ENCODE measurements at regions of chr10 and their contacts with region 1.

Region 1: DNA sequence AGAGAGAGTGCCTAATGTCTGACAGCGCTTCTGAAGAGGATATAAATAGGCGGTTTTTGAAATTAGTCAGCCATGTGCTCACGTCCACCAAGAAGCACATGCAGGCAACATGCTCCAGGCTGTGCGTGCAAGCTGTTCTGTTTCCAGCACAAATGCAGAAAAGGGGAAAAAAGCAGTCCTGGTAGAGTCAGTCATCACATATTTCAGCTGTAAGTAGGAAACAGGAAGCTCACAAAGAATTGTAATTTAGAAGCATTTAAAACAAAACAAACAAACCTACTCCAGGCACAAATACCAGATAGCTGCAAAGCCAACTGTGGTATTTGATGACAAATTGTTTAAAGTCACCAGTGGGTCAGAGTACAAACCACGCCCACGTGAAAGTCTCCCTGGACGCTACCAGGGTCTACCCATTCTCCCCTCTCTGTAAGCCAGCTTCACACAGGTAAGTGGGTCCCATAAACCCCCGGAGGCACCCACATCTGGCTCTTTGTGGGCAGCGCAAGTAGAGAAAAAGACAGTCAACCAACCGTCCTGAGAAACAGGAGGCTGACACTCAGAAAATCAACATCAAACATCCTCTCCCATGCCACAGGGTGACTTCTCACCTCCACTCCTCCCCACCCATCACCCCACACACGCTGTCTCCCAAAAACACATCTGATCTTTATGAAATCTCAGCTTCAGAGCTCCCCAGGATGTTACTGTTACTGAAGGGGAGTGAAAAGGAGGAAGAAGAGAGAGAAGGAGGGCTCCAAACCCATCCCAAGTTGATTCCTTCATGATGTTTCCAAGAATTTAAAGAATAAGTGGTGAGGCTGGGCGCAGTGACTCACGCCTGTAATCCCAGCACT is 186.4 kb downstream of the FAM107B start:
- DNase-seq: no peak
- H3K4me3 ChIP-seq: no peak overlapping the region
- H3K27ac ChIP-seq: peak overlapping the region; percentile 25
- H3K4me1 ChIP-seq: peaks cover 83% of the 10 kb centered on the region
- CTCF ChIP-seq: no peak

Region 2: DNA sequence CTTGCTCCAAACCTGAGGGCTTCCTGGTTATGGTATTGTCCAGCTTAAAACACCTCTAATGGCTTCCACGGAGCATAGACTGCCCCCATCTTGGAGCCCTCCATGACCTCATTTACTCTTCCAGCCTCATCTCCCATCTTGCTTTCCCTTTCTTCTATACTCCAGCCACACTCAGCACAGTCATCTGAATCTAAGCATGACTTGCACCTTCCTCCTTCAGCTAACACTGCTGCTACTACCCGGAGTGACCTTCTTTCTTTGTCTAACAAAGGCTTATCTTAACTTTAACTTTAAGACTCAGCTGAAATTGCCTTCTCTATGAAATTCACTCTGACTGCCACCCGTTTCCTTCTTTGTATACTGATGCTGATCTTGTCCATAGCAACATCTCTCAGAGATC is 51.3 kb after region 1 on chr10:
- CTCF ChIA-PET with region 1: no interaction called
- POLR2A ChIA-PET with region 1: no interaction called
- intact Hi-C with region 1: no loop called
- DNase-seq: no peak
- H3K4me3 ChIP-seq: no peak overlapping the region
- H3K27ac ChIP-seq: no peak overlapping the region
- H3K4me1 ChIP-seq: peaks cover 10% of the 10 kb centered on the region
- CTCF ChIP-seq: no peak

Region 3: DNA sequence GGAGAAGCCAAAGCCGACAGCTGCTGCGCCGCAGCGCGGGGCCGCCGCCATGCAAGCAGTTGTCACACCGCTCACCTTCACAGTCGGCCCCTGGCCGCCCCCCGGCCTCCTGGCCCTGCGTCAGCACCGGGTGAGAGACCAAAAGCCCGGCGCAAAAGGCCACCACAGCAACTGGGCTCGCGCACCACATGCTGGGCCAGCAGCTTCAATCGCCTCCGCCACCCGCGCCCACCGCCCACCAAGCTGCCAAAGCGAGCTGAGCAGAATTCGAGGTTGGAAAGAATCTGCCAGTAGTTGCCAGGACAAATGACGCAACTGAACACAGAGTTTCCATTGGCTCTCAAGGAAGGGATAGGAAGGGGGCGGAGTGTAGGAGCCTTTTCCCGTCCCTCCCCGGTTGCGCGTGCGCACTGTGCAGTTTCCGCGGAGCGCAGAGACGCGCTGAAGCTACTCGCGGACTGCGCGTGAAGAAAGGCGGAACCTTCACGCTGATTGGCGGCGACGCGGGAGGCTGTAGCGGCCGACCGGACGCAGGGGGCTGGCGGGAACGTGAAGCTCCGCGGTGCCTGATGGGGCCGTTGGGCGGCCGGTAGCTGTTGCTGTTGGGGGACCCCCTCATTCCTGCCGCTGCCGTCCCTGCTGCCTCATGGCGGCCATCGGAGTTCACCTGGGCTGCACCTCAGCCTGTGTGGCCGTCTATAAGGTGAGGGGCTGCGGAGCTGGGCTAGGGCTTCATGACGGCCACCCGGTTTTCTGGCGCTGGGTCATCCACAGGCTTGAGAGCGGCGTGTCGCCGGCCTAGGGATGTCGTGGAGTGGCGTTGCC is 249.7 kb after region 1 on chr10 and contains the starts of genes CDNF, HSPA14 and MSANTD7:
- CTCF ChIA-PET with region 1: no interaction called
- POLR2A ChIA-PET with region 1: interaction called, 10 read pairs
- intact Hi-C with region 1: no loop called
- DNase-seq: peak; percentile 100
- H3K4me3 ChIP-seq: peak within 1 kb of the TSS; percentile 88
- H3K27ac ChIP-seq: peak within 1 kb of the TSS; percentile 56
- H3K4me1 ChIP-seq: peaks cover 12% of the 10 kb centered on the region
- CTCF ChIP-seq: no peak
- total RNA-seq, gene CDNF: 0.72 and 3.2 TPM in 2 replicates
- total RNA-seq, gene HSPA14: 21.8 and 29.4 TPM in 2 replicates
- total RNA-seq, gene MSANTD7: 22.2 and 26.5 TPM in 2 replicates

Measured in OCI-LY7 (cell line).